Activated CD4-positive, alpha-beta T cell treated with anti-CD3 and anti-CD28 coated beads for 36 hours (primary cell): ENCODE measurements at regions of chr9 and their contacts with region 1.

Region 1: DNA sequence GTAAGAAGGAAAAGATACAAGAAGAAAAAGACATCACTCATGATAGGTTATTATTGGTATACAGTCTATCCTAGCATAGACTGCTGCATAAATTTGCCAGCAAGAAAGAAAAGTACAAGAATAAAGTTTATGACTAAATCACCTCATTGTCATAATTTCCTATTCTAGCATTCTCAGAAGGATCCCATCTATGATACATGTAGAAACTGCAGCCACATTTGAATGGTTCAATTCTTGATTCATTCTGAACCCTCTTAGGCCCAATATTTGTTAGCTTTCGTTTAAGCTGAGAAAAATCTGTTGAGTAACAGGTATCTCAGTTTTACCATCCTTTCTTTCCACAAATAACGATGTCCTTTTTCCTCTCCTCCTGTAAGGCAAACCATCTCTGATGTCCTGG is 21.2 kb downstream of the INVS start:
- DNase-seq: no peak
- ATAC-seq: peak; percentile 90
- H3K4me3 Mint-ChIP-seq: no peak overlapping the region
- H3K27ac Mint-ChIP-seq: peak overlapping the region; percentile 8
- H3K4me1 Mint-ChIP-seq: peaks cover 17% of the 10 kb centered on the region
- H3K27me3 Mint-ChIP-seq: no peaks in the 10 kb centered on the region

Region 2: GRCh38 chr9:100084734-100085133 is 35.6 kb before region 1 on chr9:
- CTCF ChIA-PET with region 1: interaction called, 3 read pairs
- POLR2A ChIA-PET with region 1: interaction called, 4 read pairs
- intact Hi-C with region 1: loop called in 1 of 2 experiments (anchors 1 kb)
- DNase-seq: no peak
- ATAC-seq: peak; percentile 62
- H3K4me3 Mint-ChIP-seq: no peak overlapping the region
- H3K27ac Mint-ChIP-seq: no peak overlapping the region
- H3K4me1 Mint-ChIP-seq: peaks cover 80% of the 10 kb centered on the region
- H3K27me3 Mint-ChIP-seq: no peaks in the 10 kb centered on the region

Region 3: GRCh38 chr9:100106616-100107015 is 13.7 kb before region 1 on chr9:
- CTCF ChIA-PET with region 1: no interaction called
- POLR2A ChIA-PET with region 1: no interaction called
- intact Hi-C with region 1: loop called in 1 of 2 experiments (anchors 1 kb)
- DNase-seq: no peak
- ATAC-seq: peak; percentile 20
- H3K4me3 Mint-ChIP-seq: no peak overlapping the region
- H3K27ac Mint-ChIP-seq: no peak overlapping the region
- H3K4me1 Mint-ChIP-seq: peaks cover 8% of the 10 kb centered on the region
- H3K27me3 Mint-ChIP-seq: no peaks in the 10 kb centered on the region